ENCODE measurements at regions of chr5 and their contacts with region 1.

Region 1: GRCh38 chr5:135476615-135477582 is 24.7 kb upstream of the TIFAB start:
- DNase-seq: no peak
- H3K4me3 ChIP-seq: no peak overlapping the region
- H3K27ac ChIP-seq: no peak overlapping the region
- H3K4me1 ChIP-seq: no peaks in the 10 kb centered on the region
- CTCF ChIP-seq: no peak

Region 2: GRCh38 chr5:135426102-135427082 is 50.5 kb before region 1 on chr5:
- CTCF ChIA-PET with region 1: no interaction called
- POLR2A ChIA-PET with region 1: no interaction called
- intact Hi-C with region 1: no loop called
- DNase-seq: peak; percentile 69
- H3K4me3 ChIP-seq: no peak overlapping the region
- H3K27ac ChIP-seq: no peak overlapping the region
- H3K4me1 ChIP-seq: no peaks in the 10 kb centered on the region
- CTCF ChIP-seq: peak; percentile 93

Region 3: GRCh38 chr5:135488727-135489465 is 12.0 kb after region 1 on chr5:
- CTCF ChIA-PET with region 1: no interaction called
- POLR2A ChIA-PET with region 1: no interaction called
- intact Hi-C with region 1: no loop called
- DNase-seq: no peak
- H3K4me3 ChIP-seq: no peak overlapping the region
- H3K27ac ChIP-seq: no peak overlapping the region
- H3K4me1 ChIP-seq: no peaks in the 10 kb centered on the region
- CTCF ChIP-seq: no peak

Region 4: DNA sequence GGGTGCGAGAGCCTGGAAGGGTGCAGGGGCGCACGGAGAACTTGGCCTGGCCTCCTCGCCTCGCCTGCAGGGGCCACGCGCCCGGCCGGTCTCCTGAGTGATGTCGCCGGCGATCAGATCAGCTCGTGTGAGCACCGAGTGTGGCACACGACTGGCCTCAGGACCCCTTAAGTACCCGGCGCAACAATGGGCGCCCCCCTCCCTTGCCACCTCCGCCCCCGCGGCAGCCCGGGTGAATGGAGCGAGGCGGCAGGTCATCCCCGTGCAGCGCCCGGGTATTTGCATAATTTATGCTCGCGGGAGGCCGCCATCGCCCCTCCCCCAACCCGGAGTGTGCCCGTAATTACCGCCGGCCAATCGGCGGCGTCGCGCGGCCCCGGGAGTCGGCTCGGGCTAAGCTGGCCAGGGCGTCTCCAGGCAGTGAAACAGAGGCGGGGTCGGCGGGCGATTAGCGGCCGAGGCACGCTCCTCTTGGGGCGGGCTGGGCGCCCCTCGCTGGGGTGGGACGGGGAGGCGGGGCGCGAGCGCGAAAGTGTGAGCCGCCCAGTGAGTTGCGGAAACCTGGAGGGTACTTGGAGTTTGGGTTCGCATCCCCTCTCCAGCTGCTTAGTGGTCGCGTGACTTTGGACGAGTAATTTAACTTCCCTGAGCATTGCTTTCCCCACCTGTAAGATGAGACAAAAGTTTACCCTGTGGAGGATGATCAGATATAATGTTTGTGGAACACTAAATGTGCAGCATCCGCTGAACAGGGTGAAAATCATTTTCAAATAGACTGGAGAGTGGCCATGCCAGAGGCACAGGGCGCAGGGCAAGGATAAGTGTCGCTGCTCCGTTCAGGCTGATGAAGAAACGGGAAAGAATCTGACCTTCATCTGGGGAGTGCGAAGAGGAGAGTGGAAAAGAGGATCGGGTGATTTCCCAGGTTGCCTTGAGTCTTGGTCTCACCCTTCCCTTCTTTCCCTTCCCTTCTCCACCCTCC is 59.2 kb after region 1 on chr5 and contains the start of gene NEUROG1:
- CTCF ChIA-PET with region 1: no interaction called
- POLR2A ChIA-PET with region 1: no interaction called
- intact Hi-C with region 1: loop called (anchors 5 kb)
- DNase-seq: no peak
- H3K4me3 ChIP-seq: no peak within 1 kb of the TSS
- H3K27ac ChIP-seq: no peak within 1 kb of the TSS
- H3K4me1 ChIP-seq: no peaks in the 10 kb centered on the region
- CTCF ChIP-seq: no peak
- total RNA-seq, gene NEUROG1: not detected in 2 replicates

Measured in OCI-LY7 (cell line).